Activated naive CD8-positive, alpha-beta T cell treated with anti-CD3 and anti-CD28 coated beads, Interleukin-2, amount 10 ng/mL, durations not matched to agents 7 days and 5 days (primary cell): ENCODE measurements at regions of chr17 and their contacts with region 1.

Region 1: DNA sequence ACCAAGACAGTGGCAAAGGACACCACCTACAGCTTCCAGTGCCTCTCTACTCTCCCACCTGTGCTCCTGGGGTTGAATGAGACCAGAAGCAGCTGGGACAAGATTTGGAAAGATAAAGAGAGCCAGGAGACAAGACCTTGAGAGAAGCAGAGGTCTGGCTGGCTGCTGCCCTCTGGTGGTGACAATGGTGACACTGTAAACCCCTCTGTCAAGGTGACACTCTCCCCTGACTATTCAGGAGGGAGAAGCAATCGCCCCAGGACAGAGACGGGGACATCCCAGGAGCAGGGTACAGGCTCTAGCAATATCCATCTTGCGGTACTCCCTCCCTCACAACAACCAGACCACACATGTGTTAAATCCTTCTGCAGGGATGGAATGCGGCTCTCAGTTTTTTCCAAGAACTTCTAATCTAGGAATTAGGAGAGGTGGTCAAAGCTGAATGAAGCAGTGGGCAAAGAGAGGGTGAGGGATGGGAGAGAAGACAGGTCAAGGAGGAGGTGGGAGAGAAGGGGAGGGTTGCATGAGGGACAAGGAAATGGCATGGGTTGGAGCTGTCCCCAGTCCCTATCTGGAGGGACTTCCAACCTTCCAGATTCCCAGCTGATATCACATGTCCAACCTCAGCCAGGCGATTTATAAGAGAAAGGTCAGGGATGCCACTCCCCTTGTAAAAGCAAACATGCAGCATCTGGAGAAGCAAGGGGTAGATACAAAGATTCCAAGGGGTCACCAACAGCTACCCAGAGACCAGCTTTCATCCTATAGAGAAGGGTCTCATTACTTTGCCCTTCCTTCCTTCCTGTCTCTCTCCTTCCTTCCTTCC is 2.9 kb downstream of the PHOSPHO1 start:
- DNase-seq: peak; percentile 76
- ATAC-seq: peak; percentile 28
- H3K4me3 Mint-ChIP-seq: no peak overlapping the region
- H3K27ac Mint-ChIP-seq: no peak overlapping the region
- H3K4me1 Mint-ChIP-seq: peaks cover 32% of the 10 kb centered on the region
- H3K27me3 Mint-ChIP-seq: peaks cover 16% of the 10 kb centered on the region

Region 2: DNA sequence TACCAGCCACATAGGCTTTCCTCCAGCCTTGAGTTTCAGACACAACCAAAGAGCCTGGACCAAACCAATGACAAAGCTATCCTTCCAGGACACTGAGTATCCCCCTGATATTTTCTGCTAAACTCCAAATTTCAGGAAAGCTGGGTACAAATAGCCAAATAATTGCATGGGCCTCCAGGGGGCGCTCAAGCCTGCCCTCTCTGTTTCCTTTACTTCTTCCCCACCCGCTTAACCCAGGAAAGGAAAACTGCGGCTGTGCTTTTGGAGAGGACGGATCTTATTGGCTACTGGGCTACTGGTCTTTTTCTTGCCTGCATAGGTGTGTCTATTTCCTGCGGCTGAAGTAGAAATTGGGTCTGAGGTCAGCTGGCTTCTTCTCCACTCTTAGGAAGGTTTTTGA is 47.3 kb before region 1 on chr17:
- POLR2A ChIA-PET with region 1: interaction called, 44 read pairs
- DNase-seq: peak; percentile 65
- ATAC-seq: peak; percentile 22
- H3K4me3 Mint-ChIP-seq: no peak overlapping the region
- H3K27ac Mint-ChIP-seq: no peak overlapping the region
- H3K4me1 Mint-ChIP-seq: peaks cover 5% of the 10 kb centered on the region
- H3K27me3 Mint-ChIP-seq: peaks cover 3% of the 10 kb centered on the region

Region 3: DNA sequence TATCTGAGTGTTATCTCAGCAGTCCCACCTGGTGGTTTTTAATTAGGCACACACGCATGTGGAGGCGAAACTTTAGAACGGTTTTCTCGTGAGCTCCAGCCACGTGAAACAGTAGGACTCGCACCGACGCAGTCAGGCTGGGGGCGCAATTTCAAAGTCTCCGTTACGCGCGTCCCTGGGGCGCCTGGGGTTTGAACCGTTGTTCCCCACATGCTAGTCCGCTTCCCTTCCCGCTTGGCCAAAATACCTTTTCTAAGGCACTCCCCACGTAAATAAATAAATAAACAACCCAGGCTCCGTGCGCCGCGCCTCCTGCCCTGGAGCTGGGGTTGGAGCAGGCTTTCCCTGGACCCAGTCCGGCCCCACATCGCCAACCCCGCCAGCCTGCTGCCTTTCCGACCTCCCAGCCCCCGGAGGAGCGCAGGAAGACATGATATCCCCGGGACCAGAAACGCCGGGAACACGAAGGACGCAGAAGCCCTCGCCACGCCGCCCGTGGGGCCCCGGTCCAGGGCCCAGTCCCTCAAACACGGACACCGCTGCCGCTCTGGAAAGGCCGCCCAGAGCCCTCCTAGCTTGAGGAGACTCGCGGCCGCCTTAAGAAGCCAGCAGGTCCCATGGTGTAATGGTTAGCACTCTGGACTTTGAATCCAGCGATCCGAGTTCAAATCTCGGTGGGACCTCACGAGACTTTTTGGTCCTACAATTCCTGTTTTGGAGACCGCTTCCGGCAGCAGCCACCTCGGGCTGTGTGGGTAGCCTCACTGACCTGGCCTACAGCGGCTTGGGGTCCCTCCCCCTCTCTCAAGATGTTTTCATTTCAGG is 35.5 kb before region 1 on chr17:
- POLR2A ChIA-PET with region 1: interaction called, 32 read pairs
- DNase-seq: peak; percentile 96
- ATAC-seq: peak; percentile 50
- H3K4me3 Mint-ChIP-seq: peak overlapping the region; percentile 91
- H3K27ac Mint-ChIP-seq: peak overlapping the region; percentile 100
- H3K4me1 Mint-ChIP-seq: peaks cover 34% of the 10 kb centered on the region
- H3K27me3 Mint-ChIP-seq: peaks cover 1% of the 10 kb centered on the region